Sciatic nerve (tissue), 2 donors: ENCODE measurements at regions of chr3 and their contacts with region 1.

Region 1: DNA sequence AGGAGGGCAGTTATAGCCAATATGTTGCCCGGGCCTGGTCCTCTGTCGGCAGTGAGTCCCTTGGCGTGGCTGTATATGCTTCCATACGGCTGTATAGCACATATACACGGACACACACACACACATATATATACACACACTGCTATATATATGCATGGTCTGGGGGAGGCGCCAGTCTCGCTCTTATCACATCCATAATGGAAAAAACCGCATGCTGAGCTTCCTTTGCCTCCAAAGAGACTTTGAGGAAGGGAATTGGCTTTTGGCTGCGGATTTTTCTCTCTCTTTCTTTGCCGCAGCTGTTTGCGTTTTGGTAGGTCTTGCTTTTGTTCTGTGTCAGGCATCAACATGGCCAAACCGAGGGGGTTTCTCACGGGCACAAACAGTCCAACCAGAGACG is 11.3 kb upstream of the TMEM115 start:
- DNase-seq: no peak
- ATAC-seq: no peak

Region 2: DNA sequence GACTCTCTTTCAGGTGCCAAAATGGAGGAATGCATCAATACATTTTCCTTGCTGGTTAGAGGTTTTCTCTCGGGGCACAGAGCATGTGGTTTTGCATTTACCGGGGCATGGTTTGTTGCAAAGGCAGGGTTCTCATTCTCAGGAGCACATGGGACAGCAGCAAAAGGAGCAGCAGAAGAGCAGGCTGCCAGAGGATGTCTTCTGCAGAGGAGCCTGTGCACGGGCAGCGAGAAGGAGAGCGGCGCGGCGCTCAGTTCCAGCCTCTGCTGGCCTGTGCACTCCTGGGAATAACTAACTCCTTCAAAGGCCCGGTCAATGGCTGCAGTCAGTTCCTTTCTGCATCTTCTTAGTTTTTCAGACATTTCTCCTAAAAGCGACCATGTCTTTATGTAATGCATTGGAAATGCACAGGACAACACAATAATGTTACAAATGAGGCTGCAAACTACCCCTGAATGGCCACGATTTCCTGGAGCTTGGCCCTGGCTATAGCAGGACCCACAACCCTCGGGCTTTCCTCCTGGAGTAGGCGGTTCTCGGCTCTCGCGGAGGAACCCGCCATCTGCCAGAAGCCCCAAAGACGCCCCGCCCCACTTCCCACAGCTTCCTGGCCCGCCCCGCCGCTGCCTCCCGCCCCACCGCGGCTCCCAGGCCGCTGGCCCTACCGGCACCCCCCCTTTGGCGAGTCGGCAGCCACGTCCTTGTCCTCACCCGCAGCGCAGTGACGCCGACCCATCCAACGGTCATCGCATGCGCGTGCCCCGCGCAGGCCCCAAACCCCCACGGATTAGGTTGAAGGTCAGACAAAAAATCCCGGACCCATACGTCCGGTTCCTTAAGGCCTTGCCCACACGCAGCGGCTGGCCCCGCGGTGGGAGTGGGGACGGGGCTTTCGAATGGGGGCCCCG is 1093.9 kb before region 1 on chr3 and contains the start of gene C3orf62:
- intact Hi-C with region 1: no loop called
- DNase-seq: peak; percentile 94
- ATAC-seq: peak; percentile 95
- total RNA-seq, gene C3orf62: 6.7 TPM

Region 3: GRCh38 chr3:50008931-50009330 is 361.7 kb before region 1 on chr3:
- intact Hi-C with region 1: no loop called
- DNase-seq: no peak
- ATAC-seq: no peak

Region 4: DNA sequence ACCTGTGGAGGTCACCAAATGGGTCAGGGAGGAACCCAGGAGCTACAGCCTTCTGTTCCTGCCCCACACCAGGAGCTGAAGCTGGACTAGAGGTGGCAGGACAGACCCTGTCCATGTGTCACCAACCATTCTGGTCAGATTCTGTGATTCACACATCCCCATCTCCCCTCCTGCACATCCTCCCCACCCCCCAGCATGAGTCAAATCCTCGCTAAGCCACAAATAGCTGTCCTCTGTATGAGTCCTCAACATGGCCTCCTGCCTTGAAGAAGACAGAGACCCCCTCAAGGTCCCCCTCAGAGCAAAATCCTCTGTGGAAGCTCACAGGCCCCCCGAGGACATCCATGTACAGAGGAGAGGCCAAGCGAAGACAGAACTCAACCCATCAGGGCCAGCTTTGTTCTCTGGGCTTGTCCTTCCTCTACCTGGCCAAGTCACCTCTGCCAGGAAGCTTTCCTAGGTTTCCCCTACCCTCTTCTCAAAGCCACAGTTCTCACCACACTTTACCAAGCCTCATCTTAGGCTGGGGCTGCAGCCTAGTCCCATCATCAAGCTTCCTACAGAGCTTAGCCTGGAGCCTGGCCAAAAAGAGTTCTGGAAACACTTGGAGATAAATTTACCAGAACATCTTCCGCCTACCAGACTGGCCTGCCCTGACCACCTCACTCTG is 115.8 kb after region 1 on chr3:
- intact Hi-C with region 1: no loop called
- DNase-seq: no peak
- ATAC-seq: no peak

Region 5: DNA sequence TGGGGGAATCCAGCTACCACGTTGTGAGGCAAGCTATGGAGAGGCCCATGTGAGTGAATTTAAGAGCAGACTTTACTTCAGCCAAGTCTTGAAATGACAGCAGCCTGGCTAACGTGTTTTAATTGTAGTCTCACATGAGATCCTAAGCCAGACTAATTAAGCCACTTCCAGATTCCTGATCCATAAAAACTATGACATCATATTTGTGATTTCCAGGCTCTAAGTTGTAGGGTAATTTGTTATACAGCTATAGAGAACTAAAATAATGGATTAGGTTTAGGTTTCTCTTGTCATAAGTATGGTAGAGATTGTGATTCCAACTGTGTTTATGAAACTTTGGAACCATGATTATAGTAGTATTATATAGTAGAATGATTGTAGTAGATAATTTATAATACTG is 633.6 kb after region 1 on chr3:
- intact Hi-C with region 1: loop called (anchors 5 kb)
- DNase-seq: no peak
- ATAC-seq: no peak